ENCODE measurements at regions of chr11 and their contacts with region 1.

Region 1: DNA sequence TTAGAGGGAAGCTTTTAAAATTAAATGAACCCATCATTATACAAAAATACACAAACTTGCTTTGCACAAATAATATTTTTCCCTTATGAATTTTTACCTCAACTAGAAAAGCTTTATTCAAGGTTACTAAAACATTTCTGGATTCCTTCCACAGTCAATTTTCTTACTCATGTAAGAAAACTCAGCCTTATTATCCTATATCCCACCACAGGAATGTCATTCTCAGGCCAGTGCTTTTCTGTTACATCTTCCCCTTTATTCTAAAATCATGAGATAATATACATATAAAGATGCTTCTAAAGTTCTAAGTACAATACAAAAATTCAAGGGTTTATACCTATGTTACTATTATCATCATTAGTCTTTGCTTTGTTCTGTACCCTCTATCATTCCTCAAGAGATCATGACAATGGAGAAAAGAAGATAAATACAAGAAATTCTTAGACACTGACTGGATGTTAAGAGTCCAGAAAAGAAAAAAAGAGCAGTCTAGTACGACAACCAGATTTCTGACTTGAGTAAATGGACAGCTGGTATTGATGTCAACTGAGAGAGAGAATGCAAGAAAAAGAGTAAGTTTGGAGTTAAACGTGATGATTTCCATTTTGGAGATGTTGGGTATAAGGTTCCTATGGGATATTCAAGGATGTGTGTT is 60.3 kb downstream of the MTMR2 start:
- DNase-seq: no peak

Region 2: DNA sequence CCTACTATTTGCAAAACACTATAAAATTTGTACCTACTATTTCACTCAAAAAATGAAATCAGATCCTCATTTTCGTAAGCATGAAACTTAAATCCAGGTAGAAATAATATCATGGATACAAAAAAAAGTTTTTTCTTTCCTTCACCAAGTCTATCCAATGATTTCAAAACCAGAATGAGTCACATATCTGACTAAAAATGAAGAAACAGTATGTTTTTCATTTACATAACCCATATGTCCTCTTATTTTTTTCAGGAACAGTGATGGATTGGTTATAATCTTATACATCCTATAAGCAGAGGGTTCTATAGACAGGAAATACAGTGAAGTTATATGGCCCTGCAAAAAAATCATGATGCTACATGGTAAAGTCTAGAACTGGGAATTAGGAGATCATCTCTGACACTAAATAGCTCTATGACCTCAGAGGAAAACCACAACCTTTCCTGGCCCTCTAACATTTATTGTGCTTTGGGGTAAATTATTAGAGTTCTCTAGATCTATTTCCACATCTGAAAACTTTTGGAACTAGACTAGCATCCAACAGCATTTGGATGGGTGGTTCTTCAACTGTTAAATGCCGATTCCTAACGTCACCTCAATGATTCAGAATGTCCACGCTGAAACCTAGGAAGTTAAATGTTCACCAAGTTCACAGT is 49.4 kb after region 1 on chr11:
- intact Hi-C with region 1: no loop called
- DNase-seq: no peak

Region 3: GRCh38 chr11:95937358-95937757 is 73.7 kb after region 1 on chr11:
- intact Hi-C with region 1: loop called (anchors 10 kb)
- DNase-seq: no peak